Heart right ventricle (tissue), 16 donors: ENCODE measurements at regions of chr16 and their contacts with region 1.

Region 1: DNA sequence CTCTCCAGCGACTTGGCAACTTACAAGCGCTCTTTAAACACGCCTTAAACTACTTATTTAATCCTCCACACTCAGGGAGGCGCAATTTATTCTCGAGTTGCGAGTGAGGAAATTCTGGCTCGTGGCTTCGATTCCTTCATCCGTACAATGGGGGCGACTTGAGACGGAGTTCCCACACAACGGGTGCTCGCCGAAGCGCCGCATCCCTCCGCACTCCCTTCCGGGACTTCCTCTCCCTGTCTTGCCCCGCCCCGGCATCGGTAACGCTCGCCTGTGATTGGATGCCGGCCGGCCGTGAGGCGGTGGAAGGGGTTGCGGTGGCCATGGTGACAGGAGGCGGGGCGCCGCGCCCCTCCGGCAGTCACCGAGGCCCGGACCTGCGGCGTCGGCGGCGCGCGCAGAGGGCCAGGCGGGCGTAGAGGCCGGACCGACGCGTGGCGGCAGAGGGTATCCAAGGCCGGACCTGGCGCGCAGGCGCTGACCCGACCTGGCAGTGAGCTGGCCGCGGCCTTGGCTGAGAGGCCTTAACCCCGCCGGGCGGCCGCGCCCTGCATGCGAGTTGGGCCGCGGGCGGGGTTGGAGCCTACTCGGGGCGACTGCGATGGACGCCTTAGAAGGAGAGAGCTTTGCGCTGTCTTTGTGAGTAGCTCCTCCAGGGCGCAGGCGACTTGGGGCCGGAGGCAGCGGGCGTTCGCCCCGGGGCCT is at the start of gene ARL2BP:
- DNase-seq: peak; percentile 97 to 98
- ATAC-seq: peak; percentile 97 to 100 (median 98)
- H3K4me3 ChIP-seq: peak within 1 kb of the TSS; percentile 74 to 97 (median 82)
- H3K27ac ChIP-seq: peak within 1 kb of the TSS; percentile 89 to 97 (median 96)
- H3K4me1 ChIP-seq: peaks cover 0 to 31% (median 12%) of the 10 kb centered on the region in 9 donors
- H3K27me3 ChIP-seq: no peaks in the 10 kb centered on the region
- CTCF ChIP-seq: peak in 5 of 9 donors; percentile 8 to 40 (median 25)
- total RNA-seq, gene ARL2BP: 39.9 to 53.9 (median 45.9) TPM

Region 2: DNA sequence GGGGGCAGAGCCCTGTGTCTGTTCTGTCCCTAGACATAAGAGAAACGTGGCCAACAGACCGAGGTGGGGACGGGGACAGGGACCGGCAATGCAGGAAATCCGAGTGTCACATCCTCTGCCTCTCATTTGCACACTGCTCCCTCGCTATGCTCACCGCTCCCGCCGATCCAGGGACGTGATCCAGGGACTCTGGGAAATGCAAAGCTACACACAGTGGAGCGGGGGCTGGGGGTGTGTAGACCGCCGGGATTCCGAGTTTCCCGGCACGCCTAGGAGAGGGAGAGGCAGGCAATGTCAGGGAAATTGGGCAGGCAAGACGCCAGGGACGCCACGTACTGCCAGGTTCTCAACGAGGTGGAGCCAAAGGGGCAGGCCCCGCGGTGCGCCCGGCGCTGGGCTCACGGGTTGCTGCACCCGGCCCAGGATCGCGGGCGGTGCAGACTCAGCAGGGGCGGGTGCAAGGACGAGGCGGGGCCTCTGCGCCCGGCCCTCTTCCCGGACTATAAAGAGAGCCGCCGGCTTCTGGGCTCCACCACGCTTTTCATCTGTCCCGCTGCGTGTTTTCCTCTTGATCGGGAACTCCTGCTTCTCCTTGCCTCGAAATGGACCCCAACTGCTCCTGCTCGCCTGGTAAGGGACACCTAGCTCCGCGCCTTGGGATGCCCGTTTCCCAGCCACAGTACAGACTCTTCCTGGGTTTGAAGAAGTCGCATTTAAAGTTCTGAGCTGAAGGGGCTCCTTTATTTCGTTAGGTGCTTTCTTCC is 562.8 kb before region 1 on chr16 and contains the start of gene MT1X:
- intact Hi-C with region 1: no loop called
- DNase-seq: peak; percentile 88 to 95
- ATAC-seq: peak; percentile 93 to 99 (median 98)
- H3K4me3 ChIP-seq: peak within 1 kb of the TSS; percentile 37 to 71 (median 58)
- H3K27ac ChIP-seq: peak within 1 kb of the TSS; percentile 60 to 90 (median 82)
- H3K4me1 ChIP-seq: peaks cover 0 to 55% (median 28%) of the 10 kb centered on the region in 9 donors
- H3K27me3 ChIP-seq: peaks cover 0 to under 1% (median 0%) of the 10 kb centered on the region in 7 donors
- CTCF ChIP-seq: no peak
- total RNA-seq, gene MT1X: 15.8 to 616 (median 71.4) TPM

Region 3: DNA sequence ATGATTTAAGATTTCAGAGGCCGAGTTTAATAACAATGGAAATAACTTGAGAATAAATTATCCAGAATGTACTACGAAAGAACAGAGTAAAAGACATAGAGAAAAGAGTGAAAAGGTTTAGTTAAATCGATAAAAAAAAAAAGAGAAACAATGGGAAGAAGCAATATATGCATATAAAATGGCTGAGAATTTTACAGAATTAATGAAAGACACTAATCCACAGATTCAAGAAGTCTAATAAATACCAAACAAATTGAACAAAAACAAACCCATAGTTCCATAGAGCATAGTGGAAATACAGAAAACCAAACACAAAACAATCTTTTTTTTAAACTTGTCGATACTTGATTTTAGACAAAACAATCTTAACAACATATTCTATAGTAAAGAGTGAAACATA is 60.8 kb before region 1 on chr16:
- intact Hi-C with region 1: no loop called
- DNase-seq: no peak
- ATAC-seq: no peak
- H3K4me3 ChIP-seq: peak overlapping the region in 1 of 10 donors; percentile 76
- H3K27ac ChIP-seq: no peak overlapping the region
- H3K4me1 ChIP-seq: peaks cover 0 to 41% (median 36%) of the 10 kb centered on the region in 9 donors
- H3K27me3 ChIP-seq: no peaks in the 10 kb centered on the region
- CTCF ChIP-seq: no peak

Region 4: DNA sequence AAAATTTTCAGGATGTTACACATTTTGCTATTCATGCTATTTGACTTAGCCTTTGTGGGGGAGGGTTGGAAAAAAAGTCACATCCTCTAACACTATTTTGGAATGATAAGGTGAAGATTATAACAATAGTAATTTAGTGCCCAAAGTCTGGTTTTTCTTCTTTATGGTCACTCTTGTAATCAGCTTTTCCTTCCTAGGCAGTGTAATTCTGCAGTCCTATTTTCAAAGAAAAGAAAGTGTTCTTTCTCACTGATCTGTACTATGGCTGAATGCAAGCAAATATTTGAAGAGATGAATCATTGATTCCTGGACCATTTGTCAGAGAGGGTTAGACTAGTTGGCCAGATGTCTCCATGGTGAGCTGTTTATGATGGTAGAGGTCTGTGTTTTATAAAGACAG is 50.4 kb before region 1 on chr16:
- intact Hi-C with region 1: no loop called
- DNase-seq: no peak
- ATAC-seq: peak in 4 of 8 donors; percentile 44 to 74 (median 53)
- H3K4me3 ChIP-seq: no peak overlapping the region
- H3K27ac ChIP-seq: peak overlapping the region in 2 of 10 donors; percentile 19 to 35
- H3K4me1 ChIP-seq: peaks cover 0 to 66% (median 45%) of the 10 kb centered on the region in 9 donors
- H3K27me3 ChIP-seq: no peaks in the 10 kb centered on the region
- CTCF ChIP-seq: no peak

Region 5: GRCh38 chr16:57284208-57284951 is 39.5 kb after region 1 on chr16 and contains the start of gene PLLP:
- intact Hi-C with region 1: loop called in 2 of 10 experiments (anchors 1 to 5 kb)
- DNase-seq: peak in 1 of 2 donors; percentile 40
- ATAC-seq: peak; percentile 51 to 77 (median 65)
- H3K4me3 ChIP-seq: peak within 1 kb of the TSS; percentile 43 to 70 (median 62)
- H3K27ac ChIP-seq: peak within 1 kb of the TSS in 5 of 10 donors; percentile 3 to 50 (median 20)
- H3K4me1 ChIP-seq: peaks cover 3 to 16% (median 13%) of the 10 kb centered on the region in 9 donors
- H3K27me3 ChIP-seq: peaks cover 0 to 34% (median 17%) of the 10 kb centered on the region in 7 donors
- CTCF ChIP-seq: no peak
- total RNA-seq, gene PLLP: 1.7 to 4.0 (median 2.2) TPM

Region 6: DNA sequence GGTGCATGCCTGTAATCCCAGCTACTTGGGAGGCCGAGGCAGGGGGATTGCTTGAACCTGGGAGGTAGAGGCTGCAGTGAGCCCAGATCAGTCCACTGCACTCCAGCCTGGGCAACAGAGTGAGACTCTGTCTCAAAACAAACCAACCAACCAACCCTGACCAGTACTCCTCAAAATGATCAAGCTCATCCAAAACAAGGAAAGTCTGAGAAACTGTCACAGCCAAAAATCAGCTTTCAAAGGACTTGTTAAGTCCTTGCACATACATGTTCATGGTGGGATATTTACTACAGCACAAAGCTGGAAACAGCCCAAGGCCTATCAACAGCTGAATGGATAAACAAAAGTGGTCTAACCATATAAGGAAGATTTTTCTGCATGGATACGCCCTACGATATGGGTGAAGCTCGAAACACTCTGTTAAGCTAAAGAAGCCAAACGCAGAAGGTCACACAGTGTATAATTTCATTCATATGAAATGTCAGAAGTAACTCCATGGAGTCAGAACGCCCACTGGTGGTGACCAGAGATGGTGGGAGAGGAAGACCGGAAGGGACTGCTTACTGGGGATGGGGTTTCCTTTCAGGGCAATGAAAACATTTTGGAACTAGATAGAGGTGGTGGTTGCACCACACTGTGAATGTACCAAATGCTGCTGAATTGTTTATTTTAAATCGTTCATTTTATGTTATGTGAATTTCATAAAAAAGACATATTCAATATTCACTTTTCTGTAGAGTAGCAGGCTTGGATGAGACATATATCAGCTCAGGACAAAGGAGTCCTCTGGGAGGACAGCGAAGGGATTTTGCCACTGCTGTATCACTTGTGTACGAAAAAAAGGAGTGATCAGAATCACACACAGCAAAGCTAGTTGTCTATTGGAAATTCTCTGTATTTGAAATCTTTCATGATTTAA is 177.4 kb after region 1 on chr16:
- intact Hi-C with region 1: loop called in 2 of 10 experiments (anchors 2 to 10 kb)
- DNase-seq: peak in 1 of 2 donors; percentile 57
- ATAC-seq: peak in 4 of 8 donors; percentile 36 to 65 (median 48)
- H3K4me3 ChIP-seq: no peak overlapping the region
- H3K27ac ChIP-seq: peak overlapping the region in 1 of 10 donors; percentile 41
- H3K4me1 ChIP-seq: peaks cover 8 to 51% (median 37%) of the 10 kb centered on the region in 9 donors
- H3K27me3 ChIP-seq: no peaks in the 10 kb centered on the region
- CTCF ChIP-seq: peak; percentile 15 to 82 (median 70)